ENCODE measurements at regions of chr9 and their contacts with region 1.

Region 1: DNA sequence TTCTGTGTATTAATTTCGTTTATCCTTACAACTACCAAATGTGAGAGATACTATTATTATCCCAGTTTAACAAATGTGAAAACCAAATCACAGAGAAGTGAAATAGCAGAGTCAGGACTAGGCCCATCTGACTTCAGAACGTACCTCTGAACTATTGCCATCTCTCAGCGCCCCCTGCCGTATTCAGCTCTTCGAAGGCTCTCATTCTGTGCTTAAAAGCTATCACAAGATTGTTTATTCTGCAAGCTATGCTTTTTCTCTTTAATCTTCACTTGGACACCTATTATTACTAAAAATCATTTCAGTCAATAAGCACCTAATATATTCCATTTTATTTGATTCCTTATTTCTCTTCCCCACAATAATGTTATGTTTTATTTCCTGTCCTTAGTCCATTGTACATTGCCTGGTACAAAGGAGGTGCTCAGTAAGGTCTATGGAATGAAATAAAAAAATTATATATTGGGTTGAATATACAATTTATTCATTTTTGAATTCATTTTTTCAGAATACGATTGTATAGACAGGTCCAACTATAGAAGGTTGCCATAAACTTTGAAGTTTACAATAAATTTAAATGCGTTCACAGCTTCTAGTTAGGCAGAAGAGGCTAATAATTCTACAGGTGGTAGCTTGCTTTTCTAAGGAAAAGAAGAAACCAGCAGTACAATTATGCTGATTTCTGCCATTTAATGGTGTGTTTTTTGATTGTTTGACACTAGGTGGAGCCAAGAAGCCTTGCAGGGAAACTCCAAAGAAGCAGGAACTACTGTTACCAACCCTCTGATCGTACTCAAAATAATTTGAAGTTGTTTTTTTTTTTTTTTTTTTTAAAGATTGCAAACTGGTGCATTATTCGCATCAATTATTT is 202.2 kb upstream of the DMRTA1 start:
- DNase-seq: peak; percentile 61
- ATAC-seq: peak; percentile 38
- H3K4me3 Mint-ChIP-seq: no peak overlapping the region
- H3K27ac Mint-ChIP-seq: no peak overlapping the region
- H3K4me1 Mint-ChIP-seq: peaks cover 29% of the 10 kb centered on the region
- H3K27me3 Mint-ChIP-seq: peaks cover 10% of the 10 kb centered on the region
- CTCF ChIP-seq: peak; percentile 66

Region 2: DNA sequence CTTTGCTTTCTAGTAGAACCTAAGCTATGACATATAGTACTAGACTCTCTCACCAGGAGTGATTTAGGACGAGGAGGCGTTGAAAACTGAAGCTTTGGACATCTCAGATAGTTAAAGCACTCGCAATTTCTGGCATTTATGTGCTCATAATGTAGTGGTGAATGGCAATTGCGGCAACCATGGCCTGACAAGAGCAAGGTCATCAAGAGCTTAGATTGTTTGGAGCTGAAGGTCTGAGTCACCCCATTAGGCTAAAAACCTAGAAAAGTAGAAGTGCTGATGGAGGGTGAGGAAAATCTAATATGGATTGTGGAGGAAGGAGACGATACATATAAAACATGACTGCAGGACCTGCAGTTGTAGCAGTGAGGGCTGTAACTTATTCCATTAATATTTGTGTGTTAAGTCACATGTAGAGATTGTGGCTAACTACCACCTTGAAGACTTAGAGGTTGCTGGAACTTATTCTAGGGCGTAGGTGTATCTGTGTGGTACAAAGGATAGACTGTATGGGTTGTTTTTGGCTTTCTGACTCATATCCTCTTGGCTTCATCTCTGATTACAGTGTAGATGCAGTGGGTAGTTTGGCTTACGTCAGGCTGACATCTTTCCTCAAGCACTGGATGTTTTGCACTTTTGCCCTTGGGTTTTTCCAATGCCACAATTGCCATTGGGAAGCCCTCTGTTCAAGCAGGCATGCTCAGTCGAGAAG is 96.4 kb before region 1 on chr9:
- CTCF ChIA-PET with region 1: interaction called, 11 read pairs
- POLR2A ChIA-PET with region 1: no interaction called
- intact Hi-C with region 1: no loop called
- DNase-seq: peak; percentile 47
- ATAC-seq: peak; percentile 98
- H3K4me3 Mint-ChIP-seq: no peak overlapping the region
- H3K27ac Mint-ChIP-seq: no peak overlapping the region
- H3K4me1 Mint-ChIP-seq: peaks cover 21% of the 10 kb centered on the region
- H3K27me3 Mint-ChIP-seq: peaks cover 10% of the 10 kb centered on the region
- CTCF ChIP-seq: no peak

Region 3: GRCh38 chr9:22316645-22317044 is 72.3 kb after region 1 on chr9:
- CTCF ChIA-PET with region 1: no interaction called
- POLR2A ChIA-PET with region 1: no interaction called
- intact Hi-C with region 1: no loop called
- DNase-seq: no peak
- ATAC-seq: no peak
- H3K4me3 Mint-ChIP-seq: no peak overlapping the region
- H3K27ac Mint-ChIP-seq: no peak overlapping the region
- H3K4me1 Mint-ChIP-seq: no peaks in the 10 kb centered on the region
- H3K27me3 Mint-ChIP-seq: no peaks in the 10 kb centered on the region
- CTCF ChIP-seq: no peak

Region 4: GRCh38 chr9:22452415-22453010 is 208.1 kb after region 1 on chr9:
- CTCF ChIA-PET with region 1: interaction called, 10 read pairs
- POLR2A ChIA-PET with region 1: no interaction called
- intact Hi-C with region 1: loop called (anchors 5 kb)
- DNase-seq: peak; percentile 74
- ATAC-seq: peak; percentile 58
- H3K4me3 Mint-ChIP-seq: no peak overlapping the region
- H3K27ac Mint-ChIP-seq: no peak overlapping the region
- H3K4me1 Mint-ChIP-seq: no peaks in the 10 kb centered on the region
- H3K27me3 Mint-ChIP-seq: peaks cover 31% of the 10 kb centered on the region
- CTCF ChIP-seq: peak; percentile 91

Measured in activated CD8-positive, alpha-beta T cell treated with anti-CD3 and anti-CD28 coated beads for 36 hours (primary cell).